Motor neuron (in vitro differentiated cells): ENCODE measurements at regions of chr6 and their contacts with region 1.

Region 1: DNA sequence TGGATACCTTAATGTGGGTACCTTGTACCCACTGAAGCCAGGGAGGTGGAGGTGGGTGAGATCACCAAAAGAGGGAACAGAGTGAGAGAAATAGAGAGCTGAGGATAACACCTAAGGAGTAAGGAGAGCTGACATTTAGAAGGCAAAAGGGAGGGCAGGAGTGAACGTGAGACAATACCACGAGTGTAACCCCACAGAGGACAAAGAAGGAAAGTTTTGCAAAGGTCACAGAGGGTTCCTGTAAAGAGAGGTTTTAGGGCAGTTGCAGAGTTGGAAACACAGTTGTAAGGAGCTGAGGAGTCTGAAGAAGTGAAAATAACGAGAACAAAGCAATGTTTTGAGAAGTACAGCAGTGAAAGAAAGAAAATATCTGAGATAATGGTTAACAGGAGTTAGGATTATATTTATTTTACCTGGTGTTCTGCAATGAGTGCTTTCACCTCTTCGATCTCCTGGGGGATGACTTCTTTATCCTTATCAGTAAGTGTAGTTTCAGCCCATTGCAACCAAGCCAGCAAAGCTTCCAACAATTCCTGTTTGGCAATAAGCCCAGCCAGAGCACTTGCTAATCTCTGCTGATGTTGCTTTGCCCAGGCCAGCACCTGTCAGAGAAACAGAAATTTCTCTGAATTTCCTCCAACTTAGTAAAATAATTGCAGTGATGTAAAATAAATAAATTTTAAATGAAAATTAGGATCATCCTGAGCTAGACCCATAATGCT is 166.8 kb downstream of the DST start:
- ATAC-seq: peak in 1 of 8 experiments; percentile 36
- H3K4me3 ChIP-seq: no peak overlapping the region
- H3K27ac ChIP-seq: no peak overlapping the region
- H3K4me1 ChIP-seq: peaks cover 0 to 7% of the 10 kb centered on the region in 2 donors

Region 2: DNA sequence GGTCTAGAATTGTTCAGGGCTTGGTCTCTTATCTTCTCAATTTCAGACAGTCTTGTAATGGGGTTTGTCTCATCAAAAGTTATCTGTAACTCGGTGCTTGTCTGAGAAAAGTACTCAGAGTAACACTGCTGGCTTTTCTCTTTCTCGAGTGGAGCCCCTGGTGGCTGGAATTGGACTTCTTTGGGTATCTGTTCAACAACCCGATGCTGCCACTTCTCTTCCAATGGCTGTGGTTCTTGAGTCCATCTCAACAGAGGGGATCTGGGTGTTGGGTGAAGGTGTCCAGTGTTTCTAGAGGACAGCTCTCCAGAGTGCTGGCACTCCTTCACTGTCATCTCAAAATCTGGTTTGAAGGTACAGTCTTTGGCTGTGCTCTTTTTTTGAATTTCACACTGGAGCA is 142.2 kb after region 1 on chr6:
- in situ Hi-C with region 1: loop called in 1 of 9 experiments (anchors 25 kb)
- ATAC-seq: no peak
- H3K4me3 ChIP-seq: no peak overlapping the region
- H3K27ac ChIP-seq: no peak overlapping the region
- H3K4me1 ChIP-seq: peaks cover 0 to 4% of the 10 kb centered on the region in 2 donors